Calu3 (cell line): ENCODE measurements at regions of chr2 and their contacts with region 1.

Region 1: DNA sequence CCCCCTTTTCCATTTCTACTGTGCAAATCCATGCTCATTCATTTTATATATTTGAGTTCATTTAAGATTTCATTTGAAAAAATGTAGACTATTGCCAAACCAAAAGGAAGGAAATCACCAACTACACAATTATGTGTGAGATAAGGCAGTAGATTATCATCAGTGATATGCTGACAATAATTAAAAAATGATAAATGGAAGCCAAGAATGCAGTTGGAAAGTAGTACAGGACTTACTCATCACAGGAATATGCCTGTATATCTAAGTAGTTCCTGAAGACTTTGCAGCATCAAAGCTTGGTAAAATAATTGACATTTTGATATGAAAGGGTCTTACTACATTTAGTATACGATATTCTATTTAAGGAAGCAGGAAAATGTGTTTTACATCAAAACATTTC is 166.1 kb upstream of the OTX1 start:
- DNase-seq: no peak
- H3K4me3 Mint-ChIP-seq: no peak overlapping the region
- H3K27ac Mint-ChIP-seq: no peak overlapping the region
- H3K4me1 Mint-ChIP-seq: no peaks in the 10 kb centered on the region
- H3K27me3 Mint-ChIP-seq: no peaks in the 10 kb centered on the region
- CTCF ChIP-seq: no peak

Region 2: DNA sequence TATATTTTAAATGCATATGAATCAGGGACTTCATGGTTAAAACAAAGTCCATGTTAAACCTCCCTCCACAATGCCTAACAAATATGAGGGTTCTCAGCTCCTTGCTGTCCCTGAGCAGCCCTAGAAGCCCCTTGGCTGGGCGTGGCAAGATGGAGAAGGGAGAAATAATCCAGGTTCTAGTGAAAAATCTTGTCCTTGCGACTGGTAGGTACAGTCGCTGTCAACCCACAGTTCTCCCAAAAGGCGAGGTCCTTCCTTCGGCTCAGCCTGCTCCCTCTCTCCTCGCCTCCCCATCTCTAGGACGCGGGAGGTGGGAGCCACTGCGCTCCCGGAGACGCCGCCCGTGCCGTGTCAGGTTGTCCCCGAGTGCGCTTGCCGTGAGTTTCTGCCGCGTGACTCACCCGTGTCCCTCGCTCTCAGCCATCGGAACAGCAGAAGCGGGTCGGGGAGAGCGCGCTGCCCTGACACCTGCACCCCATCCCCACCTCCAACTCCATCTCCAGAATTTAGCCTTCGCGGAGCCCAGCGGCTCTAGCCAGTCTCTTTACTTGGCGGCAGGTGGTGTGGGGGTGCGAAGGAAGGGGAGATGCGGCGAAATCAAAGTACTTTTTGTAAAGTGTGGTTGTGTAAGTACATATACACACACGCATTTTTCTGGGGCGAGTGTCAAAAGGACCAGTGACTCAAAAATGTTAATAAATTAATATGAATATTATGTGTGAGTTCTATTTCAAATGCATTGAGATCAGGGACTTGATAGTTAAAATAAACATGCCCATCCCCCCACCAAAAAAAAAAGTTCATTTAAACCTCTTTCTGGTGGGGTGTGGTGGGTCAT is 313.4 kb before region 1 on chr2:
- CTCF ChIA-PET with region 1: no interaction called
- intact Hi-C with region 1: no loop called
- DNase-seq: peak; percentile 44
- H3K4me3 Mint-ChIP-seq: peak overlapping the region; percentile 70
- H3K27ac Mint-ChIP-seq: peak overlapping the region; percentile 94
- H3K4me1 Mint-ChIP-seq: peaks cover 65% of the 10 kb centered on the region
- H3K27me3 Mint-ChIP-seq: no peaks in the 10 kb centered on the region
- CTCF ChIP-seq: no peak

Region 3: DNA sequence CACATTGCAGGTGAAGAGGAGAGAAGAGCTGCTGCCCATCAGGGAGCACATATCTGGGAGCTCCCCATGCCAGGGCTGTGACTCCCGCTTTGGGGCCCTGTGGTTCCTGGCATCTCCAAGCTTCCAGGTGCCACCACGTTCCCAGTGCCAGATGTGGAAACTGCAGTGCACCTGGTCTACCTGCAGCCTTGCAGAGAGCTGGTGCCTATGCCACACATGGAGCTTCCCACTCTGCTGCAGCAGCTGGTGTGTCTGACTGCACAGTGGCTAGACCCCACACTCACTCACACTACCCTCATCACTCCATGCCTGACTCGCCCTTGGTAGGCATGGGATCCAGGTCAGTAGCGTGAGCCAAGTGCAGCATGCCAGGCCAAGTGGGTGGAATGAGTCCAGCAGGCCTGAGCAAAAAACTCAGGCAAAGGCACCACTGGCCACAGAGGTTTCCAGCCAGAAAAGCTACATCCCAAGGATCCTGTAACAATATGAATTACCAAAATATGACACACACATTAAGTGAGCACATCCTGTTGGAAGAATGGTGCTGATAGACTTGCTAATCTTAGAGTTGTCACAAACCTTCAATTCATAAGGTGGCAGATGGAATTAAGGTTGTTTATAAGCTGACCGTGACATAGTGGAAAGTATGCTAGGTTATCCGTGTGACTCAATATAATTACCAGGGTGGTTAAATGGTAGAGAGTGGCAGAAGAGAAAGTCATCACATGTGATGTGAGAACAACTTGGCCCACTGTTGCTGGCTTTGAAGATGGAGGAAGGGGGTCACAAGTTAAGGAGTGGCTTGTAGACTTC is 28.1 kb before region 1 on chr2:
- CTCF ChIA-PET with region 1: no interaction called
- intact Hi-C with region 1: loop called (anchors 1 kb)
- DNase-seq: no peak
- H3K4me3 Mint-ChIP-seq: no peak overlapping the region
- H3K27ac Mint-ChIP-seq: no peak overlapping the region
- H3K4me1 Mint-ChIP-seq: no peaks in the 10 kb centered on the region
- H3K27me3 Mint-ChIP-seq: no peaks in the 10 kb centered on the region
- CTCF ChIP-seq: no peak